ENCODE measurements at regions of chr4 and their contacts with region 1.

Region 1: GRCh38 chr4:36233567-36234266 is 10.6 kb downstream of the ARAP2 start:
- DNase-seq: no peak
- H3K4me3 ChIP-seq: no peak overlapping the region
- H3K27ac ChIP-seq: no peak overlapping the region
- H3K4me1 ChIP-seq: no peaks in the 10 kb centered on the region
- H3K27me3 ChIP-seq: no peaks in the 10 kb centered on the region
- CTCF ChIP-seq: no peak
- EP300 ChIP-seq: no peak
- POLR2A ChIP-seq: no peak
- RAD21 ChIP-seq: no peak

Region 2: DNA sequence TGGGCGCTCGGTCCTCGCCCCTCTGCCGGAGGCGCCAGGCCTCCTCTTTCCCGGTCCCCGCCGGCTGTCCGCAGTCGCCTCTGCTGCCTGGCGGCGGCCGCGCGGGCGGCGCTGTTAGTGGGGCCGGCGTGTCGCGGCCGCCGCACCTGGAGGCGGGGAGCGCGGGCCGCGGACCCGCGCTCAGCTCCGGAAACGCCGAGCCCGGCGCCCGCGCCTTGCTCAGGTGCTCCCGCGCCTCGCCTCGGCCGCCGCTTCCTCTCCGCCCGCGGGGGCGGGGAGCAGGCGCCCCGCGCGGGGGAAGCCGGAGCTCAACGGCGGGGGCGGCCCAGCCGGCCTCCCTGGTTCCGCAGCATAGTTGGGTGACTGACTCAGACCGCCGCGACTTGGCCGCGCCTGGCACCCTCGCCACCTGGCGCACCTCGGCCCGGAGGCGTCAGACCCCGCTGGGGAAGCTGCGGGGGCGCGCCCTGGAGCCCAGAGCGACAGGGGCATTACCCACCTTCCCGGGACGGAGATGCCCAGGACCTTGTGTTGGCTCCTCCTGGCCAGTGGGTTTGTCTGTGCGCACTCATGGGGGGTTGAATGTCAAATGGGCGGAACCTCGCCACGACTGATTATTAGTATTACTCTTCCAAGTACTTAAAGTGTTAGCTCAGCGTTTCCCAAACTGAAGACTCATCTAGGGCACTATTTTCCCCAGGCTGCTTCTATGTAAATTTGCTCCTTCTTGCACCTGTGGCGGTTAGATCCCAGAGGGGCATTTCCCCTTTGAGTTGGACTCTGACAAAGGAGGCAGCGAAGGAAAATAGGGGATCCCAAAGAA is 10.8 kb after region 1 on chr4 and contains the start of gene ARAP2:
- CTCF ChIA-PET with region 1: interaction called, 13 read pairs
- POLR2A ChIA-PET with region 1: interaction called, 3 read pairs
- DNase-seq: peak in 1 of 2 experiments; percentile 67
- H3K4me3 ChIP-seq: peak within 1 kb of the TSS; percentile 64 to 77 (median 74)
- H3K27ac ChIP-seq: no peak within 1 kb of the TSS
- H3K4me1 ChIP-seq: no peaks in the 10 kb centered on the region
- H3K27me3 ChIP-seq: peaks cover 0 to 9% (median 4%) of the 10 kb centered on the region in 4 experiments; a peak in 4 of 7 replicates
- CTCF ChIP-seq: peak in 1 of 3 experiments; percentile 27; a peak in 2 of 4 replicates
- EP300 ChIP-seq: no peak
- POLR2A ChIP-seq: no peak
- RAD21 ChIP-seq: no peak
- total RNA-seq, gene ARAP2: 0.96 and 2.3 TPM in 2 replicates